AG04449 (cell line): ENCODE measurements at regions of chr1 and their contacts with region 1.

Region 1: DNA sequence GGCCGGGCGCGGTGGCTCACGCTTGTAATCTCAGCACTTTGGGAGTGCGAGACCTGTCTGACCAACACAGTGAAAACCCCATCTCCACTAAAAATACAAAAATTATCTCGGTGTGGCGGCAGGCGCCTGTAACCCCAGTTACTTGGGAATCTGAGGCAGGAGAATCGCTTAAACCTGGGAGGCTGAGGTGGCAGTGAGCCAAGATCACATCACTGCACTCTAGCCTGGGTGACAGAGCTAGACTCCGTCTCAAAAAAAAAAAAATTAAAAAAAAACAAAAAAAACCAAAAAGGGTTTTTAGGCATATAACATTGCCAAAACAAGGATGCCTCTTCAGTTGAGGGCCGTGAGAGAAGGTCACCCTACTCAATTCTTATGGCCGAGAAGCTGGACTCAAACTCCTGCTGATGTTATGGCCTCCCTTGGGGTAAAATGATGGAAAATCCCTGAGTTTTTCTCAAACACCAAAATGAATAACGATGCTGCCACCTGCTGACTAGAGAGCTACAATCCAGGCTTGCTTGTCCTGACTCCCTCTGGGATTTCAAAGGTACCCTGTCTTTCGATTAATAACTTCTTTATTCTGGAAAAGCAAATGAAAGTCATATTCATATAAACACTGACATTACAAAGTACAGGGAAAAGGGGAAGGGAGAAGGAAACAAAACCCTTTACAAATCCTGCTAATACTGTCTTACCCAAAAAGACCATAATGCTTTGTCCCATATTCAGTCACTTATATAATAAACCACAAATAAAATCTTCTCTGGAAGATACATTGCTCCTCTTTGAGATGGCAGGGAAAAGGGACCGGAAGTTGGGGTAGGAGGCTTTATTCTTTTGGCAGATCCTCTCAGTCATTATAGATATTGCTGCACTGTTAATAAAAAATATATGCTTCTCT is 10.7 kb downstream of the RAB42 start:
- DNase-seq: peak; percentile 42
- H3K4me3 ChIP-seq: no peak overlapping the region
- CTCF ChIP-seq: peak; percentile 57

Region 2: GRCh38 chr1:28088168-28088961 is 514.4 kb before region 1 on chr1 and contains the start of gene EYA3:
- CTCF ChIA-PET with region 1: interaction called, 10 read pairs
- POLR2A ChIA-PET with region 1: no interaction called
- DNase-seq: peak; percentile 73
- H3K4me3 ChIP-seq: peak within 1 kb of the TSS; percentile 96
- CTCF ChIP-seq: no peak

Region 3: DNA sequence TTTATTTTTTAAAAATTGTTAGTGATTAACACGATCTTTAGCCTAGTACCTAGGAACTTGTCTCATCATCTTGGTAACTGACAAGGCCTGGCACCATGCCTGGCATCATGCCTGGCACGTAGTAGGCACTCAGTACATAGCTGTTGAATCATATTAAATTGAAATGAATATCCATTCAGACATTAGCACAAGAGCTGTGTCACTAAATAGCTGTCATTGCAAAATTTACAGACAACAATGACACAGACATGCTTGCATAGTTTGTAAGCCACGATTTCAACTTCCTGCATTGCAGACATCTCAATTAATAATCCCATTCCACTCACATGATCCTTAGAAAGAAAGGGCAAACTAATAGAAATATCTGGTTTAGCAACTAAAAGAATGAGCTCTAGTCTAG is 248.7 kb before region 1 on chr1:
- CTCF ChIA-PET with region 1: interaction called, 144 read pairs
- POLR2A ChIA-PET with region 1: no interaction called
- DNase-seq: no peak
- H3K4me3 ChIP-seq: no peak overlapping the region
- CTCF ChIP-seq: no peak

Region 4: GRCh38 chr1:28409090-28409489 is 193.7 kb before region 1 on chr1:
- CTCF ChIA-PET with region 1: interaction called, 36 read pairs
- POLR2A ChIA-PET with region 1: no interaction called
- DNase-seq: no peak
- H3K4me3 ChIP-seq: no peak overlapping the region
- CTCF ChIP-seq: no peak

Region 5: GRCh38 chr1:28518000-28518744 is 84.6 kb before region 1 on chr1:
- CTCF ChIA-PET with region 1: interaction called, 114 read pairs
- POLR2A ChIA-PET with region 1: interaction called, 30 read pairs
- DNase-seq: no peak
- H3K4me3 ChIP-seq: peak overlapping the region; percentile 75
- CTCF ChIP-seq: peak; percentile 87

Region 6: DNA sequence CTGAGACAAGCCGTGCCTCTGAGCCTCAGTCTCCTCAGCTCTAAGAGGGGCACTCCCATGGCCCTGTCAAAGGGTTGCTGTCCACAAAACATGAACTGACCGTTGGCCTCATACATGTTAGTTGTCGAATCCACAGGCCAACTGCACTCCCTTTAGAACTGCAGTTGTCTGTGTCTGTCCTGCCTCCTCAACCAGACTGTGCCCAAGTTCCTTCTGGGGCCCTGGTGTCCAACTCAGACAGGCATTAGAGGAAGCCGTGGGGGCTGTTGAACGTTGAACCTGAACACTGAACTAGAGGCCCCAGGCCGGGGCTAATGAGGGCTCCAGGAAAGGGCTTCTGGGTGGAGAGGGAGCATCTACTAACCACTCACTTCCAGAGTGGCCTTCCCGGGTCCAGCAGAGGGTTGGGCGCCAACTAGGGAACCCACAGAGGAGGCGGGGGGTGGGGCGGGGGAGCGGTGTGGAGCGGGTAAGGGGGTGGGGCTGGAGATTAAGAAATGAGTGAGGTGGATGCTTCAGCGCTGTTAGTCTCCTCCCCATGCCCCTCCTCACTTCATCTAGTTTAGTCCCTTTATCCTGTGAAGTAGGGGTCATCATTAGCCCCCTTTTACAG is 11.0 kb before region 1 on chr1 and contains the start of gene RAB42:
- CTCF ChIA-PET with region 1: interaction called, 12 read pairs
- POLR2A ChIA-PET with region 1: no interaction called
- DNase-seq: no peak
- H3K4me3 ChIP-seq: peak within 1 kb of the TSS; percentile 63
- CTCF ChIP-seq: no peak